ENCODE measurements at regions of chr15 and their contacts with region 1.

Region 1: GRCh38 chr15:92938387-92938786 is 38.3 kb downstream of the CHD2 start:
- DNase-seq: no peak
- ATAC-seq: peak; percentile 36
- H3K4me3 ChIP-seq: no peak overlapping the region
- H3K4me3 Mint-ChIP-seq: no peak overlapping the region
- H3K27ac ChIP-seq: no peak overlapping the region
- H3K27ac Mint-ChIP-seq: no peak overlapping the region
- H3K4me1 ChIP-seq: peaks cover 21% of the 10 kb centered on the region
- H3K4me1 Mint-ChIP-seq: peaks cover 49% of the 10 kb centered on the region
- H3K27me3 ChIP-seq: no peaks in the 10 kb centered on the region
- H3K27me3 Mint-ChIP-seq: no peaks in the 10 kb centered on the region
- CTCF ChIP-seq: peak; percentile 40

Region 2: GRCh38 chr15:92924216-92924615 is 14.2 kb before region 1 on chr15:
- CTCF ChIA-PET with region 1: interaction called, 7 read pairs
- POLR2A ChIA-PET with region 1: no interaction called
- intact Hi-C with region 1: loop called in 1 of 2 experiments (anchors 2 kb)
- DNase-seq: no peak
- ATAC-seq: no peak
- H3K4me3 ChIP-seq: no peak overlapping the region
- H3K4me3 Mint-ChIP-seq: no peak overlapping the region
- H3K27ac ChIP-seq: no peak overlapping the region
- H3K27ac Mint-ChIP-seq: peak overlapping the region; percentile 78
- H3K4me1 ChIP-seq: peaks cover 50% of the 10 kb centered on the region
- H3K4me1 Mint-ChIP-seq: peaks cover 84% of the 10 kb centered on the region
- H3K27me3 ChIP-seq: no peaks in the 10 kb centered on the region
- H3K27me3 Mint-ChIP-seq: no peaks in the 10 kb centered on the region
- CTCF ChIP-seq: no peak

Region 3: GRCh38 chr15:92970656-92971055 is 32.3 kb after region 1 on chr15:
- CTCF ChIA-PET with region 1: interaction called, 8 read pairs
- POLR2A ChIA-PET with region 1: no interaction called
- intact Hi-C with region 1: loop called in 1 of 2 experiments (anchors 5 kb)
- DNase-seq: no peak
- ATAC-seq: no peak
- H3K4me3 ChIP-seq: no peak overlapping the region
- H3K4me3 Mint-ChIP-seq: no peak overlapping the region
- H3K27ac ChIP-seq: no peak overlapping the region
- H3K27ac Mint-ChIP-seq: peak overlapping the region; percentile 10
- H3K4me1 ChIP-seq: peaks cover 4% of the 10 kb centered on the region
- H3K4me1 Mint-ChIP-seq: peaks cover 46% of the 10 kb centered on the region
- H3K27me3 ChIP-seq: no peaks in the 10 kb centered on the region
- H3K27me3 Mint-ChIP-seq: no peaks in the 10 kb centered on the region
- CTCF ChIP-seq: no peak

Region 4: GRCh38 chr15:93001881-93002280 is 63.5 kb after region 1 on chr15:
- CTCF ChIA-PET with region 1: no interaction called
- POLR2A ChIA-PET with region 1: no interaction called
- intact Hi-C with region 1: loop called (anchors 5 to 10 kb)
- DNase-seq: no peak
- ATAC-seq: no peak
- H3K4me3 ChIP-seq: no peak overlapping the region
- H3K4me3 Mint-ChIP-seq: no peak overlapping the region
- H3K27ac ChIP-seq: no peak overlapping the region
- H3K27ac Mint-ChIP-seq: no peak overlapping the region
- H3K4me1 ChIP-seq: no peaks in the 10 kb centered on the region
- H3K4me1 Mint-ChIP-seq: peaks cover 22% of the 10 kb centered on the region
- H3K27me3 ChIP-seq: no peaks in the 10 kb centered on the region
- H3K27me3 Mint-ChIP-seq: no peaks in the 10 kb centered on the region
- CTCF ChIP-seq: no peak

Region 5: DNA sequence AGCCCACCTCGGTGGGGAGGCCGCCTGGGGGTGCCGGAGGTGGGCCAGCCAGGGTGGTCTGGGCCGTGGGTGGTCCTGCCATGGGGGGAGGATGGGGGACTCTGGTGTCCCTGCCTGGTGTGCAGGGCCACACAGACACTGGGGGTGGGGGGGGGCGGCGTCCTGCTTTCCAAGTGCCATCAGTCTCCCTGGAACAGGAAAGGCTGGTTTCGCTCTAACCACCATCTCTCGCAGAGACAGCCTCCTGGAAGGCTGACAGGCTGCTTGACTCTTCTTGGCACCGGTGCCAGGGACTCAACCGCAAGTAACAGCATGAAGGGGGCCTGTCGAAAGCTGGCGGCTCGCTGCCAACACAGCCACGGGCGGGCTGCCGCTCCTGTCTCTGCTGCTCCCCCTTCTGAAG is 110.4 kb after region 1 on chr15:
- CTCF ChIA-PET with region 1: no interaction called
- POLR2A ChIA-PET with region 1: no interaction called
- intact Hi-C with region 1: no loop called
- DNase-seq: peak in 3 of 9 experiments; percentile 43 to 49 (median 45)
- ATAC-seq: no peak
- H3K4me3 ChIP-seq: no peak overlapping the region
- H3K4me3 Mint-ChIP-seq: peak overlapping the region; percentile 8
- H3K27ac ChIP-seq: no peak overlapping the region
- H3K27ac Mint-ChIP-seq: no peak overlapping the region
- H3K4me1 ChIP-seq: peaks cover 35% of the 10 kb centered on the region
- H3K4me1 Mint-ChIP-seq: peaks cover 40% of the 10 kb centered on the region
- H3K27me3 ChIP-seq: no peaks in the 10 kb centered on the region
- H3K27me3 Mint-ChIP-seq: no peaks in the 10 kb centered on the region
- CTCF ChIP-seq: no peak

Region 6: DNA sequence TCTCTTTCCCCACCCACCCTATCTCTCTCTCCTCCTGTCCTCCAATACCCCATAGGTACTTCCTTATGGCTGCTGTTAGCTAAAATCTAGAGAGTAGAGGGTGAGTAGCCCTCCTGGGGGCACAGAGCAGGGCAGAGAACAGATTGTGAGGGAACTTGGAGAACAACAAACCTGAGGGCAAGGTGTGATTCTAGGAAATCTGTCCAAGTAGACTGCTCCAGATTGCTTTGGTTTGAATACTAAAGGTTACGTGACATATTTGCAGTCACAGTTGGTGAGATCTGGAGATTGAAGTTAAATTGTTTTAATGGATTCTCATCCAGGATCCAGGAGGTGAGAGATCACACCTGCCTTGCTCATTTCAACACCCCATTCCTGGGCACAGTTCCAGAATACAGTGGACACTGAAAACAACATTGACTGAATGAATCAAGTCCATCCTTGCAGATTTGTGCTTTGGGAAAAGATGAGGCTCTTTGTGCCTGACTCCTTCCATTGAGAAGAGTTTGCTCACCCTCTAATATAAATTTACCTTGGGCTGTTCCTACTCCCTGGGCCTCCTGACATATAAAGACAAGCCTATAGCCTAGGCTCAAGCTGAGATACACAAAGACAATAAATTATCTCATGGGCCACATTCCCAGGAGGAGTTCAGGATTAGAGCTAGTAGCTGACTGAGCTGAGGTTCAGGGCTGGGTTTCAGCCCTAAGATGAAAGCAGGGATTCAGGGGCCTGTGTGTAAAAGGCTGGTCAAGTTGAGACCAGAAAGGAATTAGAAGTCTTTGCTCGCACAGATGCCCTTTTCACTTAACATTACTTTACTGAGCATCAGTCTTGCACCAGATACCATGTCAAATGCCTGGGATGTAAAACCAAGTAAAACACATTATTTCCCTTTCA is 892.0 kb after region 1 on chr15:
- CTCF ChIA-PET with region 1: no interaction called
- POLR2A ChIA-PET with region 1: no interaction called
- intact Hi-C with region 1: no loop called
- DNase-seq: no peak
- ATAC-seq: no peak
- H3K4me3 ChIP-seq: no peak overlapping the region
- H3K4me3 Mint-ChIP-seq: no peak overlapping the region
- H3K27ac ChIP-seq: no peak overlapping the region
- H3K27ac Mint-ChIP-seq: no peak overlapping the region
- H3K4me1 ChIP-seq: no peaks in the 10 kb centered on the region
- H3K4me1 Mint-ChIP-seq: no peaks in the 10 kb centered on the region
- H3K27me3 ChIP-seq: no peaks in the 10 kb centered on the region
- H3K27me3 Mint-ChIP-seq: no peaks in the 10 kb centered on the region
- CTCF ChIP-seq: no peak